GM23248 (cell line): ENCODE measurements at regions of chr2 and their contacts with region 1.

Region 1: DNA sequence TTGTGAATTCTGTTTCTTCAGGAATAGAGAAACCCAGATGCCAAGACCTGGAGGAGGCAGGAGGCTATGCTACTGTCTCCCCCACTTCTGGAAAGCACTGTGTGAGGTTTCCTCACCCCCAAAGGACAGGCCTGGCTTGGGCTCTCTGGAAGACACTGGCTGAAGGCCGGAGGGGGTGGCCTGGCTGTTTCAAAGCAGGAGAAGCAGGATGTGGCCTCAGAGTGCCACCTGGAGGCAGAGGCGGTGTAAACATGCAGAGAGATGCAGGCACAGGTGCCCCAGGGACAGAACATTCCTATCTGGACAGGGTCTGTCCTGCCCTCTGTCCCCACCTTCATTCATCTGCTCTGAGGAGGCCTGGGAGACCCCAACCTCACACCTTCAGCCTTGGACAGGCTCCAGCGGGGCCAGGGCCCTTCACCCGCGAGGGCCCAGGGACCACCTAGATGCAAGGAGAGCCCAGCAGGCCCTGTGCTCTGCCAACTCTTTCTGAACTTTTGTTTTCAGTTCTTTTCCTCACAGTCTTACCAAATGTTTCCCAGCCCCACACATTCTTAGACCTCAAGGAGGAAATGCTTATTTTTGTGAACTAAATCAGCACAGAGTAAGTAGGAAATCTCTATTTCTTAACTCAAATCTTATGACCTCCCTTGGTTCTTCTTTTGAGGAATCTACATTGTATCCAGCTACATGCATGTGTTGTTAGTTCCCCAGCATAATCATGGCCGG is 79.2 kb downstream of the LONRF2 start:
- DNase-seq: peak; percentile 75
- H3K4me3 ChIP-seq: no peak overlapping the region
- H3K27ac ChIP-seq: no peak overlapping the region
- H3K4me1 ChIP-seq: peaks cover 9% of the 10 kb centered on the region
- H3K27me3 ChIP-seq: peaks cover 4% of the 10 kb centered on the region

Region 2: GRCh38 chr2:99238599-99238998 is 1004.5 kb before region 1 on chr2:
- in situ Hi-C with region 1: no loop called
- DNase-seq: no peak
- H3K4me3 ChIP-seq: no peak overlapping the region
- H3K27ac ChIP-seq: no peak overlapping the region
- H3K4me1 ChIP-seq: no peaks in the 10 kb centered on the region
- H3K27me3 ChIP-seq: no peaks in the 10 kb centered on the region

Region 3: GRCh38 chr2:99715956-99716355 is 527.1 kb before region 1 on chr2:
- in situ Hi-C with region 1: loop called (anchors 5 kb)
- DNase-seq: no peak
- H3K4me3 ChIP-seq: no peak overlapping the region
- H3K27ac ChIP-seq: no peak overlapping the region
- H3K4me1 ChIP-seq: peaks cover 6% of the 10 kb centered on the region
- H3K27me3 ChIP-seq: no peaks in the 10 kb centered on the region